ENCODE measurements at regions of chr9 and their contacts with region 1.

Region 1: DNA sequence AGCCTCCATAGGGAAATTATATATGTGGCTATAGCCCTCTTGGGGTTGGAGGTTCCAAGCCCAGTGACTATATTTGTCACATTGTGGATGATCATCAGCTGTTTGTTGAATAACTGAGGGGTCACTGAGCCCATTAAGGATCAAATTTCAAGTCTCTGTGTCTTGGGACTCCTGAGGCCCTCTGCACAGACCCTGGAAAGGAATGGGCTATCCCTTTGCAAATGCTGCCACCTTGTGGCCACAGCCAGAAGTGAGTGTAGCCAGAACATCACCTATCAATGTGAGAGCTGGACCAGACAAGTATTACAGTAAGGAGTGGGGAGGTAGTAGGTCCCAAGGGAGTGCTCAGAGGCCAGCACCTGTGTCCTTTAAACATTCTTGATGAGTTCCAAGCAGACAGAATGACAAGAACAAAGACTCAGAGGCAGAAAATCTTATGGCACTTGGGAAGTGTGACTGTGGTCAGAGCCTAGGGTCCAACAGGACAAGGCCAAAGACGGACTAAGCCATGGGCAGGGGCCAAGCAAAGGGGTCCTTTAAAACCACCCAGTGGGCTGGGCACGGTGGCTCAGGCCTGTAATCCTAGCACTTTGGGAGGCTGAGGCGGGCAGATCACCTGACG is 8.2 kb downstream of the RPP25L start:
- DNase-seq: peak; percentile 54
- H3K4me3 ChIP-seq: no peak overlapping the region
- H3K27ac ChIP-seq: no peak overlapping the region
- H3K4me1 ChIP-seq: peaks cover 15% of the 10 kb centered on the region
- H3K27me3 ChIP-seq: no peaks in the 10 kb centered on the region
- CTCF ChIP-seq: peak; percentile 92 to 96

Region 2: GRCh38 chr9:34328987-34329832 is 274.5 kb before region 1 on chr9 and contains the starts of genes KIF24 and NUDT2:
- CTCF ChIA-PET with region 1: no interaction called
- dilution Hi-C with region 1: no loop called
- in situ Hi-C with region 1: no loop called
- intact Hi-C with region 1: loop called (anchors 1 kb)
- DNase-seq: peak; percentile 100
- H3K4me3 ChIP-seq: peak within 1 kb of the TSS; percentile 85 to 89 (median 86)
- H3K27ac ChIP-seq: peak within 1 kb of the TSS; percentile 96
- H3K4me1 ChIP-seq: peaks cover 45% of the 10 kb centered on the region
- H3K27me3 ChIP-seq: no peaks in the 10 kb centered on the region
- CTCF ChIP-seq: no peak
- total RNA-seq, gene KIF24: 1.3 to 3.9 TPM
- total RNA-seq, gene NUDT2: 17.8 to 22.9 TPM

Region 3: DNA sequence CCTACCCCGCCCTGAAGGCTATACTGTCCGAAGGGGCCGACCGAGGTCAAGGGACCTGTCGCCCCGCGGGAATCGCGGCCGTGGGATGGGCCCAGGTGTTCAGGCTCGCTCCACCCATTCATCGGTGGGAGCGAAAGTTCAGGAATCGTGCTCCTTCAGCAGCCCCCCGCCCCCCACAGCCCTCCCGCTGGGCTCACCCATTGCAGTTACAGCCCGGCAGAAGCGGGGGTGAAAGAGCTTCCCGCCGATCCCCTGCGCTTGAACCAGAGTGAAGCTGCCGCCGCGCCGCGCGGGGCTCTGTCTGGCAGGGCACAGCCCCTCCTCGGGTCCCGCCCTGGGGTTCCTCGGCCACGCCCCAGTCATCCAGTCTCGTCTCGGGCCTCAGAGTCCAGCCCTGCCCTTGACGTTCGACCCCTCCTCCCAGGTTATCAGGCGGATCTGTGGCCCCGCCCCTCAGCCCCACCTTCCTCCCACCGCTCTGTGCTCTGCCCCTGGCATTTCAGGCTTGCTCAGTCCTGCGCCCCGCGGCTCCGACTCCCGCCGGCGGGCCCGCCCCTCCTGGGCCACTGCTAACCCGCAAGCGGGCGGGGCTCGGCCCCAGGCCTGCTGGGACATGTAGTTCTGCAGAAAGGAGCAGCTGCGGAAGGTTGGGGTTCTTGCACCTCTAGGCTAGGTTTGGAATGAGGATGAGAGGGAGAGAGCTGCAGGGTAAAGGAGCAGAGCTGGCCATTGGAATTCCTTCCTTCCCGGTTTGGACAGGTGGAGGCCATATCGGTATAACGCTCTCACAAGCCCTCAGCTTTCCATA is 226.9 kb before region 1 on chr9 and contains the start of gene MYORG:
- CTCF ChIA-PET with region 1: no interaction called
- dilution Hi-C with region 1: no loop called
- in situ Hi-C with region 1: no loop called
- intact Hi-C with region 1: loop called (anchors 1 kb)
- DNase-seq: peak; percentile 98
- H3K4me3 ChIP-seq: peak within 1 kb of the TSS; percentile 73 to 85 (median 84)
- H3K27ac ChIP-seq: peak within 1 kb of the TSS; percentile 42
- H3K4me1 ChIP-seq: peaks cover 39% of the 10 kb centered on the region
- H3K27me3 ChIP-seq: no peaks in the 10 kb centered on the region
- CTCF ChIP-seq: no peak
- total RNA-seq, gene MYORG: 23.8 to 35.0 TPM

Region 4: GRCh38 chr9:34403554-34404380 is 200.0 kb before region 1 on chr9:
- CTCF ChIA-PET with region 1: interaction called, 3 read pairs
- dilution Hi-C with region 1: no loop called
- in situ Hi-C with region 1: no loop called
- intact Hi-C with region 1: loop called (anchors 1 kb)
- DNase-seq: peak; percentile 45
- H3K4me3 ChIP-seq: no peak overlapping the region
- H3K27ac ChIP-seq: no peak overlapping the region
- H3K4me1 ChIP-seq: no peaks in the 10 kb centered on the region
- H3K27me3 ChIP-seq: no peaks in the 10 kb centered on the region
- CTCF ChIP-seq: peak; percentile 97 to 99

Region 5: GRCh38 chr9:34437006-34437925 is 166.5 kb before region 1 on chr9:
- CTCF ChIA-PET with region 1: no interaction called
- dilution Hi-C with region 1: no loop called
- in situ Hi-C with region 1: loop called in 1 of 2 experiments (anchors 10 kb)
- intact Hi-C with region 1: loop called (anchors 1 kb)
- DNase-seq: peak; percentile 61
- H3K4me3 ChIP-seq: no peak overlapping the region
- H3K27ac ChIP-seq: no peak overlapping the region
- H3K4me1 ChIP-seq: no peaks in the 10 kb centered on the region
- H3K27me3 ChIP-seq: no peaks in the 10 kb centered on the region
- CTCF ChIP-seq: peak; percentile 79 to 93

Region 6: DNA sequence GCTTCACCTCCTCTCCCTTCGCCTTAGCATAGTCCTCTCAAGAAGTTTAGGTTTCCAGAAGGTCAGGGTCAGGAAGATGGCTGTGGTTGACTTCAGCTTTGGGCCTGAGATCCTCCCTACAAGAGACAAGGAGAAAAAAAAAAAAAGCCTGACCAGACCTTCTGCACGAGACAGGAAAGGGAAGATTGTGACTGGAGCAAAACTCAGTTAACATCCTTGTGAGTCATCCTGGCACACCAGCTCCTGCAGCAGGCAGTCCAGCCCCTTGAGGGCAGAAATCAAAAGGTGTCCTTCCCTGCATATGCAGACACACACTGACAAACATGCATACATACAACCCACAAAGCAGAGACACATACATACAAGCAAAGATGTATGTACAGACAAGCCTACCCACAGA is 62.9 kb before region 1 on chr9:
- CTCF ChIA-PET with region 1: interaction called, 7 read pairs
- dilution Hi-C with region 1: no loop called
- in situ Hi-C with region 1: loop called (anchors 5 to 10 kb)
- intact Hi-C with region 1: no loop called
- DNase-seq: peak; percentile 66
- H3K4me3 ChIP-seq: no peak overlapping the region
- H3K27ac ChIP-seq: no peak overlapping the region
- H3K4me1 ChIP-seq: peaks cover 9% of the 10 kb centered on the region
- H3K27me3 ChIP-seq: no peaks in the 10 kb centered on the region
- CTCF ChIP-seq: no peak